ENCODE measurements at regions of chr1 and their contacts with region 1.

Region 1: DNA sequence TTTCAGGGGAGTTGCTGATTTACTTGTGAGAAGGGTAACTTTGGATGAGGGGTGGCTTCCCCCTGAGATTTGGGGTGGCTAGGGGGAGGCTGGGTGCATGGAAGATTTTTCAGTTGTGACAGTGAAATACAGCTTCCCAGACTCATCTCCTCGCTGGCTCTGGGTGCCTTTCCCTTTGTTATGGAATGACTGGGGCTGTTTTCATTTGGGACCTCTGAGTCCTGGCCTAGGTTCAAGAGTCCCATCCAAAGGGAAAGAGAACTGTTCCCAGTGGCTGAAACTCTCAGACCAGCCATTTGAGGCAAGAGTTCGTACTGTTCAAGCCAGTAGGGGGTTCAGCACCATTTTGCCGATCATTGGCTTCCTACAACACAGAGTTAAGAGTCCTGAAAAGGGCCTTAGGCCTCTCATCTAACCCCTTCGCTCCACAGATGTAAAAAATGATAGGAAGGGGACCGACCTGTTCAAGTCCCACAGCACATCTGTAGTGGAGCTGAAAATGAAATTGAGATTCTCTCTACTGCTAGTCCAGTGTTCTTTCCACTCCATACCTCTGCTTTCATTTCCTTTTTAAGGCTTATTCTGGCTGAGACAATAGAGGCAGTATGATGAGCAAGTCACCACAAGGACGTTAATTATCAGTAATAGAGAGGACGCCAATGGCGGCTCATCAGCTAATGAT is 958 bp downstream of the DDR2 start:
- DNase-seq: no peak
- H3K4me3 ChIP-seq: peak overlapping the region; percentile 83
- H3K27ac ChIP-seq: peak overlapping the region; percentile 97
- H3K27me3 ChIP-seq: no peaks in the 10 kb centered on the region
- CTCF ChIP-seq: peak; percentile 33

Region 2: DNA sequence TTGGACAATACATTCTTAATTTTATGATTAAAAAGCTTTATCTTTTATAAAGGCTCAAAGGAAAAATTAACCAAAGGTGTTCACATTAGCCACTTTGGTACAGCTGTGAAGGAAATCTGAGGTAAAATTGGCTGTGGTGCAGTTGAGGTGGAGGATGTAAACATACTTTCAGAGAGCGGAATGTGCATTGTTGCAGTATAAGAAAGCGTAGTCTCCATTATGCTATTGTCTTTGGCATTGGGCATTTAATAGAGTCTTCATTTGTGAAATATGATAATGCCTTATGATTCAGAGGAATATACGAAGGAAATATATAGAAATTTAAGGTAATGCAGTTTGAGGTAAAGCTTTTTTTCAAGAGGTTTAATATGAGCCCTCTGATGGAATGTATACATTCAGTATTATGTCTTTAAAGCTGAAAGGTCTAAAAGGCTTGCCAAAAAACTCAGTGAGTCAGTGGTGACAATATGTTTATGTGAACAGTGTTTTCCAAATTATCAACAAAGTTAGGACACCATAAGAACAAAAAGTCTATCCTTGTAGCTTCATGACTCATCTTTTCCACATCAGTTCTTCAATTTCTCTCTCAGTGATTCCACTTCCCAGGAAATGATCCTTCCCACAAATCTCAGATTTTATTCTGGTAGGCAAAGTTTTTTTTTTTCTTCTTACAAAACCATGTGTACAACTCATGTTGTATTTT is 27.8 kb before region 1 on chr1:
- CTCF ChIA-PET with region 1: interaction called, 3 read pairs
- POLR2A ChIA-PET with region 1: interaction called, 17 read pairs
- DNase-seq: peak; percentile 86
- H3K4me3 ChIP-seq: no peak overlapping the region
- H3K27ac ChIP-seq: no peak overlapping the region
- H3K27me3 ChIP-seq: no peaks in the 10 kb centered on the region
- CTCF ChIP-seq: no peak

Region 3: GRCh38 chr1:162696286-162696862 is 63.2 kb after region 1 on chr1:
- CTCF ChIA-PET with region 1: no interaction called
- POLR2A ChIA-PET with region 1: interaction called, 19 read pairs
- DNase-seq: peak; percentile 75
- H3K4me3 ChIP-seq: peak overlapping the region; percentile 29
- H3K27ac ChIP-seq: peak overlapping the region; percentile 83
- H3K27me3 ChIP-seq: no peaks in the 10 kb centered on the region
- CTCF ChIP-seq: no peak

Region 4: GRCh38 chr1:162782671-162783070 is 149.4 kb after region 1 on chr1:
- CTCF ChIA-PET with region 1: no interaction called
- POLR2A ChIA-PET with region 1: no interaction called
- DNase-seq: no peak
- H3K4me3 ChIP-seq: no peak overlapping the region
- H3K27ac ChIP-seq: no peak overlapping the region
- H3K27me3 ChIP-seq: no peaks in the 10 kb centered on the region
- CTCF ChIP-seq: no peak